ENCODE measurements at regions of chrX and their contacts with region 1.

Region 1: DNA sequence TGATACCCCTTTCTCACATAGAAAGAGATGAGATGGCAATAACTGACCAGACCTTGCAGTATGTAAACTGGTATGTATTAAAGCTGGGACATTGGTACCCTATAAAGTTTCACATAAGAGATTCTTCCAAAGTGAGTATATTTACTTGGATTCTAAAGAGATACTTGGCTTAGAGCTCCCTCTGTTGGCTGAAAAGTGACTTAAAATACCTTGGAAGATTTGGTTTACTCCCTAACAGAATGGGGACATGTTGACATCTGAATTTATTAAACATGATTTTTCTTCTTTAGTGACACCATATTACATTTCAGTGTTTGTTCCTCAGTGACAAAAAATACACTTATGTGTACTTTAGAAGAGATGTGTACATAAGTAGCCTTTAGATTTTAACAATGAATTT is 47.9 kb upstream of the RGN start:
- H3K4me3 ChIP-seq: no peak overlapping the region
- H3K27ac ChIP-seq: no peak overlapping the region
- H3K4me1 ChIP-seq: no peaks in the 10 kb centered on the region
- CTCF ChIP-seq: no peak

Region 2: GRCh38 chrX:47012131-47012530 is 18.2 kb before region 1 on chrX:
- CTCF ChIA-PET with region 1: interaction called, 10 read pairs
- POLR2A ChIA-PET with region 1: no interaction called
- H3K4me3 ChIP-seq: no peak overlapping the region
- H3K27ac ChIP-seq: no peak overlapping the region
- H3K4me1 ChIP-seq: no peaks in the 10 kb centered on the region
- CTCF ChIP-seq: no peak

Region 3: DNA sequence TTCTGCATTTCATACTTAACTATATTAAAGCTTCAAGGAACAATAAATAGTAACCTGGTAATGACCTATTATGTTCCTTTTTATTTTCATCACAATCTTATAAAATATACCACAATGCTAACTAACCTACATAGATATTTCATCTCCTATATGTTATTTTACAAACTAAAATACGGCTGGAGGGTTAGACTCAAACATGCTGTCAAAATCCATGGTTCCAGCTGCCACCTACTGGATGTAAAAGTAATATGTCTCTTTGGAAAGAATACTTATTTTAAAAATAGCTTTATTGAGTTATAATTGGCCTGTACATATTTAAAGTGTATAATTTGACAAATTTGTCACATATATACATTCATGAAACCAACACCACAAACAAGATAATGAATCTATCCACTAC is 62.9 kb after region 1 on chrX:
- CTCF ChIA-PET with region 1: interaction called, 14 read pairs
- POLR2A ChIA-PET with region 1: no interaction called
- H3K4me3 ChIP-seq: no peak overlapping the region
- H3K27ac ChIP-seq: no peak overlapping the region
- H3K4me1 ChIP-seq: 0 out of 2 replicates have a peak, but pooled peaks cover 2% of the 10 kb centered on the region
- CTCF ChIP-seq: no peak